Posterior vena cava (tissue), 2 donors: ENCODE measurements at regions of chr16 and their contacts with region 1.

Region 1: GRCh38 chr16:27235055-27235937 is 32.0 kb downstream of the KDM8 start:
- DNase-seq: peak; percentile 97

Region 2: DNA sequence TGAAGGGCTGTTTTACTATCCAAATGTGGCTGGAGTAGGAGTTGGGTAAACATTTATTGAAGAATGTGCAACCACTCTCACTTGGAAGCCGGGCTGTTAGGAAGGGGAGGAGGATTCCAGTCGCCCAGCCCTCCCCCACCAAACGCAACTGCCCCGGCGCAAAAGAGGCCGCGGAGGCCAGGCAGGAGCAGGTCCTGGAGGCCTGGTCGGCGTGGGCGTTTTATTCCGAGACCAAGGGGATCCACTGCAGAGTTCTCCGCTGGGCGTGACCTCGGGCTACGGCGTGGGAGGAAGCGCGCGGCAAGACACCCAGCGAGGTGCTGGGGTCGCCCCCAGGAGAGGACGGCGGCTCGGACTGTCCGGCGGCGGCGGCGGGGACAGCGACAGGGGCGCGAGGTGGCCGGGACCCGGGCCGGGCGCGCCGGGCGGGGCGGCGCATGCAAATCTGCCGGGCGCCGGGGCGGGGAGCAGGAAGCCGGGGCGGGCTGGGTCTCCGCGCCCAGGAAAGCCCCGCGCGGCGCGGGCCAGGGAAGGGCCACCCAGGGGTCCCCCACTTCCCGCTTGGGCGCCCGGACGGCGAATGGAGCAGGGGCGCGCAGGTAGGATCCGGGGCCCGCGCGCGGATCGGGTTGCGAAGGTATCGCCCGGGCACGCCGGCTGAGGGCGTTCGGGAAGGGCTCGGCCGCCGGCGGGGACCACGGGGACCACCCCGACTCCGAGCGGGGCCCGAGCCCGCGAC is 78.3 kb after region 1 on chr16 and contains the start of gene IL4R:
- intact Hi-C with region 1: loop called (anchors 5 to 10 kb)
- DNase-seq: peak; percentile 96
- total RNA-seq, gene IL4R: 99.2 to 112 TPM

Region 3: DNA sequence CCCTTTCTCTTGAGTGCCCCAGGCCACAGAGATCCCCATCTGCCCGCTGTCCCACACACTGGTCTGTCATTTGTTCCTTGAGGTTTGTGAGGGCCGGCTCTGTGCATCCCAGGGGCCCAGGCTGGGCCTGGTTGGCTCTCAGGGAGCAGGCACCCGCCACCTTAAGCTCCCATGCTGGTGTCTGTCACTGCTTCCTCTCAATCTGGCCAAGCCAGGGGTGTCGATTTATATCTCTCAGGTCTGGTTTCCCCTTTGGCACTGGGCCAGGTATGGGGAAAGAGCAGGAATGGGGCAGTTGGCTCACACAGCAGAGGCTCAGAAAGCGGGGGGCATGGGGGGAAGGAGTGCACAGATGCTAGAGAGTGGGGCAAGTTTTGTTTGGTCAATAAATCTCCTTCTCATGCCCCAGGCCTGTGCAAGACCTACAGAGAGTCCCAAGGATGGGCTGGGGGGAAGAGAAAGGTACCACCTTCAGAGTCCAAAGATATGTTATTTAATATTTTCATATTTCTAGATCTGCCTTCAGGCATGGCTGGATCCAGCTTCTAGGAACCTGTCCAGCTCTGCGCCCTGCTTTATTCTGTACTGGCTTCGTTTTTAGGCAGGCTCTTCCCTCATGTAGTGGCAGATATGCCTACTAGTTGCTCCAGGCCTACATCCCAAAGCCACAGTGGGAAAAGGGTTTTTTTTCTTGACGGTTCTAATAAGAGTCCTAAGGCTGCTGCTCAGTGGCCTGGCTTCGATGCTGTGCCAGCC is 112.8 kb after region 1 on chr16:
- intact Hi-C with region 1: loop called in 1 of 2 experiments (anchors 10 kb)
- DNase-seq: no peak

Region 4: DNA sequence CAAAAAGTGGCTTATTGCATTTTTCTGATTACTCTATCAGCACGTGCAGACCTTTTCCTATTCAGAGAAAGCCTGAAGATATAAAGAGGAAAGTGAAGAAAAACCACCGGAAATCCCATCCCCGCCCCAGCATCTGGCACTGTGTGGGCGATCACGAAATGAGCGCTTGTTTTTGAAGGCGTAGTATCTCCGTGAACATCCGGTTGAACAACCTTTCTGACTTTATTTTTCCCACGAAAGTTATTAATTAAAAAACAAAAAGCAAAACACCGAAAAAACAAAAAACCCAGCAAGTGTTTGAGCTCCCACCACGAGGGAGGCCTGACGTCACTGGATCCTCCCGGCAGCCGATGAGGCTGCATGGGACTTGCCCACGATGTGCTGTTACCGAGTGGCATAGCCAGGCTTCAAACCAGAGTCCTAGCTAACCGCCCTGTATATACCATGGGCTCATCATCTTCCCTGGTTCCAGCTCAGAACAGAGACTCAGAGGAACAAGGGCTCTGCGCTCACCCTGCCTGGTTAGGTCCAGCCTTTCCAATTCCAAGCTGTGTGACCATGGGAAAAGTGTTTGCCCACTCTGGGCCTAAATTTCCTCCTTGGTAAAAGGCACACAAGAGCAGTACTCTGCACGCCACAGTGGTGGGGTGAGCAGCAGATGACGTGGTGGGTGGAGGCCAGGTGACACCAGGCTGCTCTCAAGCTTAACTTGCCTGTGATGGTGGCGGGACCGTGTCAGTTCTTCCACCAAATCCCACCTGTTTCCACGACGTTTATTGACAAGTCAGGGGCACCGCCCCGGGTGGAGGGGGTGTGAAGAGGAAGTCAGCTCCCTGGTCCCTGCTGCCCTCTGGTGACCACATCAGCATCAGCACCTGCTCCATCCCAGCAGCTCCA is 132.4 kb after region 1 on chr16:
- intact Hi-C with region 1: loop called in 1 of 2 experiments (anchors 5 kb)
- DNase-seq: peak; percentile 95

Region 5: DNA sequence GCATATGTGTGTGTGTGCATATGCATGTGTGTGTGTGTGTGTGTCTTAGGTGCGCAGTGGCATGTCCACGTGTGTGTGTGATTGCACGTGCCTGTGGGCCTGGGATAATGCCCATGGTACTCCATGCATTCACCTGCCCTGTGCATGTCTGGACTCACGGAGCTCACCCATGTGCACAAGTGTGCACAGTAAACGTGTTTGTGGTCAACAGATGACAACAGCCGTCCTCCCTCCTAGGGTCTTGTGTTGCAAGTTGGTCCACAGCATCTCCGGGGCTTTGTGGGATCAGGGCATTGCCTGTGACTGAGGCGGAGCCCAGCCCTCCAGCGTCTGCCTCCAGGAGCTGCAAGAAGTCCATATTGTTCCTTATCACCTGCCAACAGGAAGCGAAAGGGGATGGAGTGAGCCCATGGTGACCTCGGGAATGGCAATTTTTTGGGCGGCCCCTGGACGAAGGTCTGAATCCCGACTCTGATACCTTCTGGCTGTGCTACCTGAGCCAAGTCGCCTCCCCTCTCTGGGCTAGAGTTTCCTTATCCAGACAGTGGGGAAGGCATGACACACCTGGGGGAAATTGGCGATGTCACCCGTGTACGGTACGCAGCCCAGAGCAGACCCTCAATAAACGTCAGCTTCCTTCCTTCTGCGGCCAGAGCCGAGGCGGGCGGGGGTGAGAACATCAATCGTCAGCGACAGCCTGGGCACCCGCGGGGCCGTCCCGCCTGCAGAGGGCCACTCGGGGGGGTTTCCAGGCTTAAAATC is 214.3 kb after region 1 on chr16:
- intact Hi-C with region 1: loop called in 1 of 2 experiments (anchors 10 kb)
- DNase-seq: no peak